WTC11 (cell line): ENCODE measurements at regions of chr15 and their contacts with region 1.

Region 1: GRCh38 chr15:77548589-77549520 is 83.9 kb downstream of the LINGO1 start:
- DNase-seq: no peak
- ATAC-seq: peak; percentile 55
- H3K4me3 Mint-ChIP-seq: no peak overlapping the region
- H3K27ac Mint-ChIP-seq: no peak overlapping the region; the same call in 1 of the 2 replicates
- H3K4me1 Mint-ChIP-seq: peaks cover 13% of the 10 kb centered on the region
- H3K27me3 Mint-ChIP-seq: peaks cover 3% of the 10 kb centered on the region
- CTCF ChIP-seq: no peak

Region 2: GRCh38 chr15:77568973-77569728 is 20.3 kb after region 1 on chr15:
- CTCF ChIA-PET with region 1: interaction called, 29 read pairs
- POLR2A ChIA-PET with region 1: no interaction called
- DNase-seq: no peak
- ATAC-seq: peak; percentile 14; the same call in 1 of the 2 replicates
- H3K4me3 Mint-ChIP-seq: no peak overlapping the region
- H3K27ac Mint-ChIP-seq: 0 out of 2 replicates have a peak overlapping the region, but pooled peaks have one; percentile 49
- H3K4me1 Mint-ChIP-seq: peaks cover 33% of the 10 kb centered on the region
- H3K27me3 Mint-ChIP-seq: no peaks in the 10 kb centered on the region
- CTCF ChIP-seq: no peak